PC-3 (cell line): ENCODE measurements at regions of chr7 and their contacts with region 1.

Region 1: DNA sequence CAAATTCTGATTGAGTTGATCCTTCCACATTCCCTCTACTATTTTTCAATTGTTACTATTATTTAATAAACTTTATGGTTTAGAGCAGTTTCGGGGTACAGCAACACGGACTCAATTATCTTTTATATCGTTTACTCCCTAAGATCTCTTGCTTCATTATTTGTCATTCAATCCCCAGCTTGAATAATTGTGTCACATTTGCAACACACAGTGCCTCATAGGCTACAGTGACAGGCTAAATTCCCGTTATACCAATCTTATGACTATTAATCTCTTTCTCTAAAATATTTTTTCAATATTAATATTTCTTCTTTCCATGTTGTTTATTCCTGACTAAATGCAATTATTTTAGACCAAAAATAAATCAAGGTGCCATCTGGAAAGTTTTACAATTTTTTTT is 4.0 kb upstream of the COL28A1 start:
- DNase-seq: no peak
- ATAC-seq: no peak
- H3K4me3 ChIP-seq: no peak overlapping the region
- H3K27ac ChIP-seq: no peak overlapping the region
- H3K4me1 ChIP-seq: peaks cover 6% of the 10 kb centered on the region; the same call in 1 of the 2 replicates
- H3K27me3 ChIP-seq: no peaks in the 10 kb centered on the region
- CTCF ChIP-seq: no peak

Region 2: DNA sequence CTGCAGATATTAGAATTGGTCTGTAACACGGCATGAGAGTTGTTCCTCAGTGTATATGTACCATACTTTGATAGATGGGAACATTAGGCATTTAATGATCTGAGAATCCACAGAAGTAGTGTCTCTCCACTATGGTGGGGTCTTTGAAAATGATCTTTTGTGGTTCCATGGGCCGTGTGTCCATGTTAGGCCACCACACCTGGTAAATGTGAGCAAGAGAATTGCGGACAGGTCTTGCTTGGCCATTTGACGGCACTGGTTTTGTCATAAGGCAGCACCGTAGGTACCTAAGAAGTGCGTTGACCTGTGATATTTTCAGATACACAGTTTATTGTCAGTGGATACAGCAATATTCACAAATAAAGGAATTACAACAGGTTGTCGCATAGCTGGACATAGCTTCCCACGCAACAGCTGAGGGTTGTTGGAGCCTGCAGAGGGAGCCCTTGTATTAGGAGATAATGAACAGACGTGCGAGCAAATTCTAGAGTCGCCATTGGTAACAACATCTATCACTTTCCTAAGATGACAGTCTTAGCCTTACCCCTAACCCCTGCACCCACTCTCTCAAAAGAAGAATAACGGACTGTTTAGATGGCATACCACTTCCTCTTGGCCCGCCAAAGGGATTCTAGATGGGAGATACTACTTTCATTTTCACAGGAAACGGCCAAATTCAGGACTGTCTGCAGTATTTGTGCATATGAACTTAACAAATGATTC is 115.4 kb before region 1 on chr7:
- CTCF ChIA-PET with region 1: no interaction called
- POLR2A ChIA-PET with region 1: no interaction called
- intact Hi-C with region 1: loop called (anchors 2 kb)
- DNase-seq: peak; percentile 81
- ATAC-seq: peak; percentile 95
- H3K4me3 ChIP-seq: peak overlapping the region; percentile 65
- H3K27ac ChIP-seq: no peak overlapping the region
- H3K4me1 ChIP-seq: peaks cover 8% of the 10 kb centered on the region; the same call in 1 of the 2 replicates
- H3K27me3 ChIP-seq: no peaks in the 10 kb centered on the region
- CTCF ChIP-seq: peak; percentile 94